Activated T-helper 1 cell treated with anti-CD3 and anti-CD28 coated beads, Interleukin-12 subunit alpha, Interleukin-12 subunit beta, Interleukin-2, Interleukin-4 antibody, amounts not matched to agents 30 ng/mL and 10 ng/mL and 1 ng/mL, durations not matched to agents 14 hours and 24 hours and 36 hours (primary cell): ENCODE measurements at regions of chr12 and their contacts with region 1.

Region 1: DNA sequence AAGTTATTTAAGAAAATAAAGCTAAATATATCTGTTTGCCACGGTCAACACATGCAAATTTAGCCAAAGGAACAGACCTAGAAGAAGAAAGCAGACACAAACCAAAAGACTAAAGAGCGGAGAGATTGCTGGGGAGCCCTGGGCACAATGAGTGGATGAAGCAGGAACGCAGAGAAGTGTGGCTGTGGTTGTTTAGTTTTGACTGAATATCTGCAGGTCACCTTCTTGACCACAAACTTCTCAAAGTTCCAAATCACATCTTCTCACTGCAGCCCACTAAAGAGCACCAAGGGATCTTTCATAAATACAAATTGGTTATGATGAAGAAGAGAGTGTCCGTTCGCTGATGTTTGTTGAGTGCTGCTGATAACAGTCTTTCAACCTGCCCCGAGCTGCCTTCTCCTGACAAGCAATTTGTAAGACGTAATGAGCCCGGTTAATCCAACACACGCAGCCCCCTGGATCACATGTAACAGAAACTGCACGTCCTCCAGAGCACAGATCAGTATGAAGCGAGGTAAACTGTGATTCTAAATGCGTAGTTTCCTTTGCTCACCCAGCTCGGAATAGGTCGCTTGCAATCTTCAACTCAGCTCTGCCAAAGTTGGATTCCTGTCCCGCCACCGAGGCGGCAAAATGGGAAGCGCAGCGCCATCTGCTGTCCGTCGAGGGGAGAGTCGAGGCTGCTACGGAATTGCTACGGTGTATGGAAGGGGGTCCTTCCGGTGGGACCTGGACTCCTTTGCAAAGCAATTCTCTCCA is 120.8 kb downstream of the GXYLT1 start:
- DNase-seq: peak; percentile 48
- H3K4me3 Mint-ChIP-seq: peak overlapping the region; percentile 63
- H3K27ac Mint-ChIP-seq: no peak overlapping the region
- H3K4me1 Mint-ChIP-seq: peaks cover 7% of the 10 kb centered on the region
- H3K27me3 Mint-ChIP-seq: peaks cover 15% of the 10 kb centered on the region

Region 2: GRCh38 chr12:40946612-40947194 is 1077.2 kb before region 1 on chr12:
- intact Hi-C with region 1: loop called (anchors 1 kb)
- DNase-seq: no peak
- H3K4me3 Mint-ChIP-seq: no peak overlapping the region
- H3K27ac Mint-ChIP-seq: no peak overlapping the region
- H3K4me1 Mint-ChIP-seq: no peaks in the 10 kb centered on the region
- H3K27me3 Mint-ChIP-seq: no peaks in the 10 kb centered on the region

Region 3: DNA sequence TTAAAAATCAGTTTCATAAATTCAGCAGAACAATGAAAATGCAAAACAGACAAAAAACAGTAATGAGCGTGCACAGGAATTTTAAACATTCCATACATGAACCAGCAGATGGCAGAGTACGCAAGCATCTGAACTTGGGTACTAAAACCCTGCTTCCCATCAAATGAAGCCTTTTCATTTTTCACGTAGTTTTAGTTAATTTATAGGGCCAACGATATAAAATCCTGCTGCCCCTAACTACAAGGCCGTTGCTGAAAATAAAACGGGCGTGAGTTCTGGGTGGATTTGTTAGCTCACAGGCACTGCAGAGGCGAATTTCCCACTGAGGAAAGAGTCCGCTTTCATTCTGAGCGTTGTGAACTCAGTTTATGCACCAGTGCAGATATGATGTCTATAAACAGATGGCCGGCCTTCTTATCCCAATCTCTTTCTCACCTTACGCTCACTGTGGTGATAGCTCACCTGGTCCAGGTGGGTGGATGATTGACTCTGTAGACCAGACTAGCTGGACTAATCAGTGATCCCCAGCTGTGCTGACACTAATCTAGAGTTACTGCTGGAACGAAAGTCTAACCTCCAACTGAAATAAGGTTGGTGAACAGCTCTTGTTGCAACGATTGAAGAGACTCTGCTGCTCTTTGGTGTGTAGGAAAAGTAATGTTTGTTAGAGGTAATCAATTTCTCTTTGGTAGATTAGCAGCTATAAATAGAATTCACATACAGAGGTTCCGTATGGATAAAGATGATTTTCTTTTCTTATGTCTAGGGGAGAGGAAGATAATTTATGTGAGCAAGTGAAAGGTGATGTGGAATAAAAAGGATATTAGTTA is 746.6 kb before region 1 on chr12:
- intact Hi-C with region 1: loop called (anchors 1 kb)
- DNase-seq: no peak
- H3K4me3 Mint-ChIP-seq: no peak overlapping the region
- H3K27ac Mint-ChIP-seq: no peak overlapping the region
- H3K4me1 Mint-ChIP-seq: no peaks in the 10 kb centered on the region
- H3K27me3 Mint-ChIP-seq: no peaks in the 10 kb centered on the region

Region 4: DNA sequence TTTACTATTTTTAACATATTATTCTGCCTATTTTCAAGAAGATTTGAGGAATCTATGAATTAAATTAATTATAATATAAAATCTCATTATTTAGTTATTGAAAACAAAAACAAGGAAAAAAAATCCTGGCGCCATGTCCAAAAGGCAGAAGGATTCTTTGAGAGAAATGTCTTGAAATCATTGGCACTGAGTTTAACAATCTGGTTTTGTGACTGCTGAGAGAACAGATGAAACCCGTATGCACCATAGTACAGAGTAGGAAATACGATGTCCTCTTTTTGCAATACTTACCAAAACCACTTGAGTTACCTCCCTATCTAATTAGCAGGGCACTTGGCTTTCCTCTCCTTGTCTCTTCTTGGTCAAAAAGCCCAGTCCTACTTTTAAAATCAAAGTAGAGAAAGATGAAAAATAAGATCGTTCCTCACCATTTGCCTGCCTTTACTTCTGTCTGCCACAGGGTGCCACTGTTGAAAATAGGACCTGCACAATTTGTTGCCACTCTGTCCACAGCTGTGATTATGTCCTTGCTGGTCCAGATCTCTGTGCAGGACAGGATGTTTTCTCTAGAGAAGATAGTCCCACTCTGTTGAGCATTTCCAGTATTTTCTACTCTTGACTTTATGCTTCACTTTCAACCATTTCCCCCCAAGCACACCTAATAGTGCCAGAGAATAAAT is 656.0 kb before region 1 on chr12:
- intact Hi-C with region 1: loop called (anchors 5 kb)
- DNase-seq: no peak
- H3K4me3 Mint-ChIP-seq: no peak overlapping the region
- H3K27ac Mint-ChIP-seq: no peak overlapping the region
- H3K4me1 Mint-ChIP-seq: no peaks in the 10 kb centered on the region
- H3K27me3 Mint-ChIP-seq: no peaks in the 10 kb centered on the region

Region 5: DNA sequence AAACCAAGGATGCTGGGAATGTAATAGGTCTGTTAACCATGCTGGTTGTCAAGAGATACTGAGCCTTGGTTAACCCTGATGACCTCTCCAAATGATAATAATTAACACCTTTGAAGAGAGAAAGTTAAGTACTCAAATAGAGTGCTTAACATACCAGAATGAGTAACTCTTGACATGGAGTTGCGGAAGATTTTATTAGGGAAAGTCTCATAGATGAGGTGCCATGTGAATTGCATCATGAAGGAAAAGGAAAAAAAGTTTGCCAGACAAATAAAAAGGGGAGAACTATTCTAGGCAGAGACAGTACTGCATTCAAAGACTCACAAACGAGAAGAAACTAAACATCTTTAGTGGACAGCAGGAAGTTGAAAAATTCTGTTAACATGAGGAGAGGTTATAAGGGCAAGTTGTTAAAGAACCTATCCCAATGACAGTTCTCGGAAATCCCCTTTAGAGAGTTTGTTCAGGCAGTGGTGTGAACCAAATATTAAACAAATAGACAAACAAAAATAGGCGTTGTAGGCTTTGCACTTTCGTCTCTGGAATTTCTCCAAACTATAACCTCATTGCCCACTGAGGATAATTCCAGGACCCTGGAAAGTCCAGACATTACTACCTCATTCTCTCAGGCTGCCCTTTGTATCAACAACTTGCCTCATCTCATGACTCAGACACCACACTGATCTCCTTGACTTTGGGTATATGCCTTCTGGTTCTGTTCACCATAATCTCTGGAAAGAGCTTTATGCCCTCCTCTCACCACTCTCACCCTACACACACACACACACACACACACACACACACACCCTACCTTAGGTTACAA is 314.2 kb before region 1 on chr12:
- intact Hi-C with region 1: loop called (anchors 10 kb)
- DNase-seq: no peak
- H3K4me3 Mint-ChIP-seq: no peak overlapping the region
- H3K27ac Mint-ChIP-seq: no peak overlapping the region
- H3K4me1 Mint-ChIP-seq: no peaks in the 10 kb centered on the region
- H3K27me3 Mint-ChIP-seq: no peaks in the 10 kb centered on the region

Region 6: GRCh38 chr12:41992022-41992421 is 31.9 kb before region 1 on chr12:
- intact Hi-C with region 1: no loop called
- DNase-seq: no peak
- H3K4me3 Mint-ChIP-seq: no peak overlapping the region
- H3K27ac Mint-ChIP-seq: no peak overlapping the region
- H3K4me1 Mint-ChIP-seq: no peaks in the 10 kb centered on the region
- H3K27me3 Mint-ChIP-seq: peaks cover 3% of the 10 kb centered on the region

Region 7: GRCh38 chr12:42325653-42326474 is 301.9 kb after region 1 on chr12 and contains the starts of genes PPHLN1 and ZCRB1:
- intact Hi-C with region 1: loop called (anchors 2 kb)
- DNase-seq: peak; percentile 79
- H3K4me3 Mint-ChIP-seq: peak within 1 kb of the TSS; percentile 98
- H3K27ac Mint-ChIP-seq: peak within 1 kb of the TSS; percentile 97
- H3K4me1 Mint-ChIP-seq: peaks cover 46% of the 10 kb centered on the region
- H3K27me3 Mint-ChIP-seq: no peaks in the 10 kb centered on the region
- total RNA-seq, gene PPHLN1: 89.2 and 90.1 TPM in 2 replicates
- total RNA-seq, gene ZCRB1: 47.4 and 58.2 TPM in 2 replicates

Region 8: DNA sequence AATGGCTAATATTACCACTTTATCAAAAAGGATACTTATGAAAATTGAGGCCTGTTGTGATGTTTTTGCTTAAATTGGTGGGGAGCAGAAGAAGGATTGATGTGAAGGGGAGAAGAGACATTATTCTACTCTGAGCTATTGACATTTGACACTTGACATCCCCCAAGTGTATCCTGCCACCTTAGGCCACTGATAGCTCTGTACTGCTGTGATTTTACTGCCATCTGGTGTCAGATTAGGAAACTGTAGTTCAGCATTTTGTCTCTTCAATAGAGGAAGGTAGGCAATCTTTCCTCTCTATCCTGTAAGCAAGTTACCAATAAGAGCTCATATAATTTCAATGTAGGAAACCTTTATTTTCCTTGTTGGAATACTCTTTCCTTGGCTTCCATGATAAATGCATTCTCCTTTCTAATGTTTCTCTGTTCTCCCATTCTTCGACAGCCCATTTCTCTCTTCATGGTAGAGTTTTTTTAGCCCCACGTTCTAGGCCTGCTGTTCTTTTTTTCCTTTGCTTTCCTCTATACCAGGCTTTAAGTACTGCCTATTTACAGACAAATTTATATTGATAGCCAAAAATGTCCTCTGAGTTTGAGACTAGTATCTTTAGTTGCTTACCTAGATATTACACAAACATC is 348.4 kb after region 1 on chr12:
- intact Hi-C with region 1: loop called (anchors 1 kb)
- DNase-seq: peak; percentile 12
- H3K4me3 Mint-ChIP-seq: no peak overlapping the region
- H3K27ac Mint-ChIP-seq: no peak overlapping the region
- H3K4me1 Mint-ChIP-seq: no peaks in the 10 kb centered on the region
- H3K27me3 Mint-ChIP-seq: no peaks in the 10 kb centered on the region